A549 (cell line): ENCODE measurements at regions of chr2 and their contacts with region 1.

Region 1: DNA sequence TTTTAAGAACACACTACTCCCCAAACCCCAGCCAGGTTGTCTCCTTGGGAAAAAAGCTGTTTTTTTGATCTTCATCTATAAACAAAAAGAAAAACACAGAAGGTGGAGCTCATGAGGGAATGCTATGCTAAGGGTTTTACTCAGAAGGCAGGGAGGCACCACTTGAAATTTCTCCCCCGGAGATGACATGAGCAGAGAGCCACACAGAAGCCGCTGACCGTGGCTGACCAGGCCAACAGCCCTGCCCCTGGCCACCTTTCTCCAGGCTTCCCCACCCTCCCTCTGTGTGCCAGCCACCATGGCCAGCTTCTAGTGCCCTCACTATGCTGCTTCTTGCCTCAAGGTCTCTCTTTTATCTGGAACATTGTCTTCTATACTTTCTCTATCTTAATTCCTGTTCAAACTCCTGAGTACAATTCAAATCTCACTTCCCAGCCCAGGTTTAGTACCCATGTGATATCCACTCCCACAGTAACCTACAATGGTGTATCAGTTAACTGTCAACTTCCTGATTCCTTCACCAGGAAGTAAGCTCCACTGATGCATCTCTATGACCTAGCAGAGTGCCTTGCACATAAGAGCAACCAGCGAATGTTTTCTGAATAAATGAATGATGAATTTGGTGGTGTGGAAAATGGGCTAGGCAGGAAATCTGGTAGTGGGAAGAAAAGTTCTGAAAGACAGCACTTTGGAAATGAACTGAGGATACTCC is 15.3 kb downstream of the LAPTM4A start:
- DNase-seq: no peak
- ATAC-seq: peak in 1 of 2 experiments; percentile 53; a peak in 1 of 6 replicates
- H3K4me3 ChIP-seq: no peak overlapping the region
- H3K27ac ChIP-seq: no peak overlapping the region
- H3K4me1 ChIP-seq: peaks cover 7% of the 10 kb centered on the region; the same call in 2 of the 3 replicates
- CTCF ChIP-seq: no peak
- EP300 ChIP-seq: no peak
- POLR2A ChIP-seq: no peak
- RAD21 ChIP-seq: no peak

Region 2: GRCh38 chr2:19435815-19436214 is 600.3 kb before region 1 on chr2:
- CTCF ChIA-PET with region 1: no interaction called
- POLR2A ChIA-PET with region 1: no interaction called
- DNase-seq: no peak
- ATAC-seq: no peak
- H3K4me3 ChIP-seq: no peak overlapping the region
- H3K27ac ChIP-seq: no peak overlapping the region
- H3K4me1 ChIP-seq: no peaks in the 10 kb centered on the region
- CTCF ChIP-seq: no peak
- EP300 ChIP-seq: no peak
- POLR2A ChIP-seq: no peak
- RAD21 ChIP-seq: no peak

Region 3: DNA sequence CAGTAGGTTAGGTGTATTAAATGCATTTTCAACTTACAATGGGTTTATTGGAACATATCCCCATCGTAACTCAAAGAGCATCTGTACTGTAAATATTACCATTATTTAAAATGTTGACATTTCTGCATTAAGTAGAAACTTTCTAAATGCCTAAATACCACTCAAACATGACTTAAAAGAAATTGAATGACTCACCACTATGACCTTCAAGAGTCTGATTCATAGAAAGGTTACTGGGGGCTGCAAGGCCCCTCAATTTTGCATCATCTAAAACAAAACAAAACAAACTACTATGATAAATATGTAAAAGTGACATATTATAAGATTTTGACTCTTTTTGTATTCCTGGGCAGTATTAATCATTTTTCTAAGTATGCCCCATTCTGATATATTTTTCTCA is 53.8 kb before region 1 on chr2:
- CTCF ChIA-PET with region 1: no interaction called
- POLR2A ChIA-PET with region 1: no interaction called
- DNase-seq: no peak
- ATAC-seq: no peak
- H3K4me3 ChIP-seq: no peak overlapping the region
- H3K27ac ChIP-seq: no peak overlapping the region
- H3K4me1 ChIP-seq: peaks cover 13% of the 10 kb centered on the region
- CTCF ChIP-seq: no peak
- EP300 ChIP-seq: no peak
- POLR2A ChIP-seq: no peak
- RAD21 ChIP-seq: no peak

Region 4: GRCh38 chr2:20097879-20098714 is 62.0 kb after region 1 on chr2:
- CTCF ChIA-PET with region 1: interaction called, 15 read pairs
- POLR2A ChIA-PET with region 1: no interaction called
- DNase-seq: peak; percentile 93 to 96
- ATAC-seq: peak; percentile 84 to 90
- H3K4me3 ChIP-seq: no peak overlapping the region
- H3K27ac ChIP-seq: peak overlapping the region; percentile 22 to 71; a peak in 4 of 6 replicates
- H3K4me1 ChIP-seq: peaks cover 18% of the 10 kb centered on the region; the same call in 2 of the 3 replicates
- CTCF ChIP-seq: peak; percentile 99
- EP300 ChIP-seq: no peak
- POLR2A ChIP-seq: no peak
- RAD21 ChIP-seq: peak; percentile 99 to 100